SK-N-SH (cell line): ENCODE measurements at regions of chr19 and their contacts with region 1.

Region 1: GRCh38 chr19:17605761-17606745 is 50.6 kb downstream of the COLGALT1 start:
- DNase-seq: peak; percentile 98
- H3K4me3 ChIP-seq: peak overlapping the region; percentile 50 to 65
- H3K27ac ChIP-seq: peak overlapping the region; percentile 39 to 90; a peak in 2 of 4 replicates
- H3K4me1 ChIP-seq: peaks cover 0 to 14% of the 10 kb centered on the region in 2 experiments; a peak in 1 of 4 replicates
- H3K27me3 ChIP-seq: peaks cover 26% of the 10 kb centered on the region; the same call in 1 of the 2 replicates
- CTCF ChIP-seq: peak; percentile 61
- EP300 ChIP-seq: no peak
- RAD21 ChIP-seq: peak; percentile 31

Region 2: GRCh38 chr19:17555480-17555928 is 50.5 kb before region 1 on chr19 and contains the start of gene COLGALT1:
- CTCF ChIA-PET with region 1: interaction called, 10 read pairs
- POLR2A ChIA-PET with region 1: no interaction called
- DNase-seq: peak; percentile 99
- H3K4me3 ChIP-seq: peak within 1 kb of the TSS; percentile 76 to 93
- H3K27ac ChIP-seq: peak within 1 kb of the TSS; percentile 35 to 67; a peak in 3 of 4 replicates
- H3K4me1 ChIP-seq: peaks cover 0 to 7% of the 10 kb centered on the region in 2 experiments; a peak in 2 of 4 replicates
- H3K27me3 ChIP-seq: no peaks in the 10 kb centered on the region
- CTCF ChIP-seq: no peak
- EP300 ChIP-seq: no peak
- RAD21 ChIP-seq: no peak
- polyA plus RNA-seq, gene COLGALT1: 75.9 and 83.8 TPM in 2 replicates

Region 3: DNA sequence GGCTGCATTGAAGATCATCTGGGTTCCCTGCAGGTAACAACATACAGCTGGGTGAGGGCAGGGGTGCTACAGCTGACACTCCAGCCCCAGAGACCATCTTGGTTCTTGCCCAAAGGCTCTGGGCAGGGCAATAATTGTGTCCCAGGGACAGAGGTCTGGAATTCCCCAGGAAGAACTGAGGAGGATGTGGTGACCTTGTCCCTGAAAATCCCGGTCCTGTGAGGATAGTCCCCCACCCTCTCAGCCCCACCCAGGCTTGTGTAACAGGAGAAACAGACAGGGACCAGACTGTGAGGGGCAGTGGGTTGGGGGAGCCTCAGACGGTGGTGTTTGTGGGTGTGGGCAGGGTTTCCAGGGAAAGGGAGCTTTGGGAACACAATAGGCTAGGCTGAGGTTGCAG is 12.9 kb after region 1 on chr19:
- CTCF ChIA-PET with region 1: interaction called, 11 read pairs
- POLR2A ChIA-PET with region 1: no interaction called
- DNase-seq: no peak
- H3K4me3 ChIP-seq: no peak overlapping the region
- H3K27ac ChIP-seq: no peak overlapping the region
- H3K4me1 ChIP-seq: no peaks in the 10 kb centered on the region
- H3K27me3 ChIP-seq: no peaks in the 10 kb centered on the region
- CTCF ChIP-seq: no peak
- EP300 ChIP-seq: no peak
- RAD21 ChIP-seq: no peak